GM12878 (cell line): ENCODE measurements at regions of chr17 and their contacts with region 1.

Region 1: DNA sequence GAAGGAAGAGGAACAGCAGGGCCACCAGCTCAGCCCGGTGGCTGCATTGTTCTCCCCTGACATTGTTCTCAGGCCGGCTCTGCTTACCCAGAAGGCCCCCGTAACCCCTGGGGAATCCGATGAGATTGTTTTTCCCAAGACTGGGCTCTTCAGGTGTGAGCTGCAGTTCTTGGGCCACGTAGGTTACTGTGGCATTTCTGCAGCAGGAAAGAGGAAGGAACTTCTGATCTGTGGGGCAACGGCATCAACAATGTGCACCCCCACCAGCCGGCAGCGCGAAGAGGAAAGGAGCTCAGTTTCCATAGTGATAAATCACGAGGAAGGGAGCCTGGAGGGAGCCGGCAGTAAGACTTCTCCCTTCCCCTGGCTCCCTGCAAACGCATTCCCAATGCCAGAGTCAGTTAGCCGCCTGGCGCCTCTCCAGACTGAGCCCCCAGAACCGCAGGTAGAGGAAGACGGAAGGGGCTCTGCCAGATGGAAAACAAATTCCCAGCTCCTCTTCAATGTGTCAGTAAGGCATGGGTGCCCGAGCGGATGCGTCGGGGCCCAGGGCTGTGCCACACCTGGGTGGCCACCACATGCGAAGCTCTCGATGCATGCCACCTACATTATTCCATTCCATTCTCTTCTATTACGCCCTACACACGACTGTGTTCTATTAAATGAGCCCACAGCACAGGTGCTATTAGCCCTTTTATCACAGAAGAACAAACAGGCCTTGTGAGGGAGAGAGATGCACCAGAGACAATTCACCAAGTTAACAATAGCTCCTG is 21.5 kb upstream of the PECAM1 start:
- DNase-seq: no peak
- ATAC-seq: peak; percentile 50
- H3K4me3 ChIP-seq: peak overlapping the region; percentile 56; the same call in 1 of the 2 replicates
- H3K27ac ChIP-seq: no peak overlapping the region
- H3K4me1 ChIP-seq: peaks cover 30% of the 10 kb centered on the region
- H3K27me3 ChIP-seq: no peaks in the 10 kb centered on the region
- CTCF ChIP-seq: no peak
- EP300 ChIP-seq: no peak
- POLR2A ChIP-seq: no peak
- RAD21 ChIP-seq: no peak

Region 2: DNA sequence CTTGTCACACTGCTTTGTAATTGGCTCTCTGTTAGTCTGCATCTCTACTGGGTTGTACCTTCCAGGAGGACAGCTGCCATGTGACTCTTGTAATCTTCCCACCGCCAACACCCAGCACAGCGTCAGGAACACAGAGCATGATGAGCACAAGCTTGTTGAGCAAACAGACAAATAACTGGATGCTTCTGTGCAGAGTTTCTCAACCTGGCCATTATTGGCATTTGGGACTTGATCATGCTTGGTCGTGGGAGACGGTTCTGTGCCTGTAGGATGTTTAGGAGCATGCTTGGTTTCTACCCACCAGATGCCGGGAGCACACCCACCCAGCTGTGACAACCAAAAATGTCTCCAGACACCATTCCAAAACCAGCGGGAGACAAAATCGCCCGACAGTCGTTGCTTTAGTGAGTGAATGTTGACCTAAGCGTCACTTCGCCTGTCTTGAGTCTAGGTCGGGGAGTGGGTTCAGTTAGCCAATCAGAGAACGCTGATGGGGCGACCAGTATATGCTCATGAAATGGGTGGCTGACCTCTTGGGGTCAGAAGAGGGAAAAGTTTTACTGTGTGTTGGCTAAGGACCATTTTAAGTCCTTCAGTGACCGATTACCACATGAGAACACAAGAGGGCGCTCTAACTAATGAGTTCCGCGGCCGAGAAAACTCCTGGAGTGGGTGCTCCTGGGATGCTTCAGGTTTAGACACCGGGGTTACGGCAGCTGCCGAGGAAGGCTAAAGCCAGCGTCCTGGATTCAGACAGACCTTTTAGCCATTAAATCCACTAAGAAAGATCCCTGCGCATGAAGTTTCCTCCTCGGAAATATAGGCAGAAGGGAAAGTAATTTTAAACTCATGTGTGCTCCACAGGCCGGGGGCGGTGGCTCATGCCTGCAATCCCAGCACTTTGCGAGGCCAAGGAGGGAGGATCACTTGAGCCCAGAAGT is 91.3 kb before region 1 on chr17:
- CTCF ChIA-PET with region 1: interaction called, 627 read pairs
- POLR2A ChIA-PET with region 1: interaction called, 5 read pairs
- RAD21 ChIA-PET with region 1: interaction called, 23 read pairs
- SMC1A ChIA-PET with region 1: interaction called, 190 read pairs
- in situ Hi-C with region 1: loop called (anchors 5 kb)
- intact Hi-C with region 1: no loop called
- DNase-seq: no peak
- ATAC-seq: peak; percentile 82
- H3K4me3 ChIP-seq: no peak overlapping the region
- H3K27ac ChIP-seq: no peak overlapping the region
- H3K4me1 ChIP-seq: no peaks in the 10 kb centered on the region
- H3K27me3 ChIP-seq: no peaks in the 10 kb centered on the region; a peak in 1 of 4 replicates
- CTCF ChIP-seq: peak; percentile 71 to 78 (median 75)
- EP300 ChIP-seq: no peak
- POLR2A ChIP-seq: no peak
- RAD21 ChIP-seq: peak; percentile 84

Region 3: DNA sequence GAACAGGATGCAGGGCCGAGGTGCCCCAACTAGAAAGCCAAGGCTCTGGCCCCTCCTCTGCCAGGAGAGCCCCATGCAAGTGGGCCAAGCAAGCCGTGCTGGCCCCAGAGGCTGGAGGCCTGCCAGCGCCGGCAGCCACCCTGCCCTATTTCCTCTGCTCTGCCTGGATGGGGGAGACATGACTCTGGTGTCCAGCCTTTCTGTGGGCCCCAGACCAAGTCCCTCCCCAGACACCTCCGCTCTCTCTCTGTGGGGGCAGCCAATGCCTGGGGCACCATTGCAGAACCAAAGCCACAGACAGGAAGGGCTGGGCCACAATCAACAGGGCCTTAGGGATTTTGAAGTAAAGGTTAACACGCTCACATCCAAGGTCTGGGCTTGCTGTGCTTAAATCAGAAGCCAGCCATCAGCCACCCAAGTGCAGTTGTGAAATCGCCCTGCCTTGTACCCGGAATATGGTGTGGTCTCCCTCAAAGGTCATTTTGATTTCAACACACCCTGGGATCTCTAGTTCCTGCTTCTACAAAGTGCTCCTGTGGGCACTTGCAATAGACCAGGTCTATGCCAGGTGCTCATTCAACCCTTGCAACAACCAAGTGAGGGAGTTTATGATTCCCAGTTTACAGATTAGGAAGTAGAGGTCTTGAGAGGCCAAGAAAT is 85.7 kb before region 1 on chr17:
- CTCF ChIA-PET with region 1: interaction called, 627 read pairs
- POLR2A ChIA-PET with region 1: interaction called, 5 read pairs
- RAD21 ChIA-PET with region 1: interaction called, 23 read pairs
- SMC1A ChIA-PET with region 1: interaction called, 190 read pairs
- in situ Hi-C with region 1: loop called (anchors 5 kb)
- intact Hi-C with region 1: no loop called
- DNase-seq: no peak
- ATAC-seq: peak; percentile 80
- H3K4me3 ChIP-seq: no peak overlapping the region
- H3K27ac ChIP-seq: no peak overlapping the region
- H3K4me1 ChIP-seq: peaks cover 3% of the 10 kb centered on the region; the same call in 1 of the 2 replicates
- H3K27me3 ChIP-seq: no peaks in the 10 kb centered on the region
- CTCF ChIP-seq: no peak
- EP300 ChIP-seq: no peak
- POLR2A ChIP-seq: no peak
- RAD21 ChIP-seq: no peak

Region 4: DNA sequence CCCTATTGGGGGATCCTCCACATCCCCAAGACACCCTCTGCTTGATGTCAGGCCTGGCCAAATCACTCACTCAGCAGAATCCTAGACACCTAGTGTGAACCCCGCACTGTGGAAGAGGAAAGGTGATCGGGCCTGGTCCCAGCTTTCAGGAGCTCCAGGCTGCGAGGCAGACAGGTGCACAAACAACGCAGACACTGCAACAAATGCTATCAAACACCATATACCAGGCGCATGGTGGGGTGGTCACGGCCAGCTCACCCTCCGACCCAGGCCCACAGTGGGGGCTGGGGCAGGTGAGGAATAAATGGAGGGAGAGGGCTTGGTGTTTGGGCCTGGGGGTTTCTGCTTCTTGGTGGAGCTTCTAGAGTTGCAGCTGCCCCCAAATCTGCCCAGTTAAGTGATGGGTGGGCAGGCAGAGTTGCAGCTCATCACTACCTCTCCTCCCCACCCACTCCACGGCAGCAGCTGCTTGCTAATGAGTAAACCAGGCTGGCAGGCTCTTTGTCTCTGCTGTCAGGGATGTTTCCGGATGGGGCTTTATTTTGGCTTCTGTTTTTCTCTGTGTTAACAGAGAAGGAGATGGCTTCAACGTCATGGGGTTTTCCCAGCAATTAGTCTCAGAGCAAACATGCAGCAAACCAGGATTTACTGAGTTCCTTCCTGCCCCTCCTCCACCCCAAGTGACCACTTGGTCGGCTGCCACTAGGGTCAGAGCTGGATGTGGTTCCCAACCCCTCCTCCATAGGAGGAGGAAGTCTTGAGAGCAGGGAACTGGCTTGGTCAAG is 68.1 kb before region 1 on chr17:
- CTCF ChIA-PET with region 1: interaction called, 11 read pairs
- POLR2A ChIA-PET with region 1: interaction called, 9 read pairs
- RAD21 ChIA-PET with region 1: interaction called, 12 read pairs
- SMC1A ChIA-PET with region 1: interaction called, 17 read pairs
- in situ Hi-C with region 1: no loop called
- intact Hi-C with region 1: no loop called
- DNase-seq: no peak
- ATAC-seq: peak; percentile 94
- H3K4me3 ChIP-seq: no peak overlapping the region
- H3K27ac ChIP-seq: no peak overlapping the region
- H3K4me1 ChIP-seq: no peaks in the 10 kb centered on the region
- H3K27me3 ChIP-seq: no peaks in the 10 kb centered on the region
- CTCF ChIP-seq: no peak
- EP300 ChIP-seq: peak in 1 of 2 experiments; percentile 34; a peak in 2 of 4 replicates
- POLR2A ChIP-seq: no peak
- RAD21 ChIP-seq: no peak

Region 5: GRCh38 chr17:64378890-64379354 is 33.3 kb before region 1 on chr17:
- CTCF ChIA-PET with region 1: interaction called, 5 read pairs
- POLR2A ChIA-PET with region 1: interaction called, 4 read pairs
- RAD21 ChIA-PET with region 1: interaction called, 14 read pairs
- SMC1A ChIA-PET with region 1: interaction called, 31 read pairs
- in situ Hi-C with region 1: no loop called
- intact Hi-C with region 1: loop called (anchors 5 kb)
- DNase-seq: peak; percentile 72
- ATAC-seq: peak; percentile 93
- H3K4me3 ChIP-seq: no peak overlapping the region
- H3K27ac ChIP-seq: no peak overlapping the region
- H3K4me1 ChIP-seq: peaks cover 8% of the 10 kb centered on the region
- H3K27me3 ChIP-seq: no peaks in the 10 kb centered on the region
- CTCF ChIP-seq: no peak
- EP300 ChIP-seq: 0 out of 4 replicates have a peak, but pooled peaks of 1 of the 2 experiments have one; percentile 16
- POLR2A ChIP-seq: no peak
- RAD21 ChIP-seq: no peak

Region 6: GRCh38 chr17:64399071-64399766 is 13.0 kb before region 1 on chr17:
- CTCF ChIA-PET with region 1: interaction called, 22 read pairs
- POLR2A ChIA-PET with region 1: interaction called, 13 read pairs
- RAD21 ChIA-PET with region 1: interaction called, 30 read pairs
- SMC1A ChIA-PET with region 1: interaction called, 17 read pairs
- in situ Hi-C with region 1: no loop called
- intact Hi-C with region 1: no loop called
- DNase-seq: no peak
- ATAC-seq: no peak
- H3K4me3 ChIP-seq: no peak overlapping the region
- H3K27ac ChIP-seq: no peak overlapping the region; the same call in 1 of the 2 replicates
- H3K4me1 ChIP-seq: peaks cover 34% of the 10 kb centered on the region
- H3K27me3 ChIP-seq: no peaks in the 10 kb centered on the region
- CTCF ChIP-seq: no peak
- EP300 ChIP-seq: no peak
- POLR2A ChIP-seq: no peak
- RAD21 ChIP-seq: no peak